ENCODE measurements at regions of chrX and their contacts with region 1.

Region 1: DNA sequence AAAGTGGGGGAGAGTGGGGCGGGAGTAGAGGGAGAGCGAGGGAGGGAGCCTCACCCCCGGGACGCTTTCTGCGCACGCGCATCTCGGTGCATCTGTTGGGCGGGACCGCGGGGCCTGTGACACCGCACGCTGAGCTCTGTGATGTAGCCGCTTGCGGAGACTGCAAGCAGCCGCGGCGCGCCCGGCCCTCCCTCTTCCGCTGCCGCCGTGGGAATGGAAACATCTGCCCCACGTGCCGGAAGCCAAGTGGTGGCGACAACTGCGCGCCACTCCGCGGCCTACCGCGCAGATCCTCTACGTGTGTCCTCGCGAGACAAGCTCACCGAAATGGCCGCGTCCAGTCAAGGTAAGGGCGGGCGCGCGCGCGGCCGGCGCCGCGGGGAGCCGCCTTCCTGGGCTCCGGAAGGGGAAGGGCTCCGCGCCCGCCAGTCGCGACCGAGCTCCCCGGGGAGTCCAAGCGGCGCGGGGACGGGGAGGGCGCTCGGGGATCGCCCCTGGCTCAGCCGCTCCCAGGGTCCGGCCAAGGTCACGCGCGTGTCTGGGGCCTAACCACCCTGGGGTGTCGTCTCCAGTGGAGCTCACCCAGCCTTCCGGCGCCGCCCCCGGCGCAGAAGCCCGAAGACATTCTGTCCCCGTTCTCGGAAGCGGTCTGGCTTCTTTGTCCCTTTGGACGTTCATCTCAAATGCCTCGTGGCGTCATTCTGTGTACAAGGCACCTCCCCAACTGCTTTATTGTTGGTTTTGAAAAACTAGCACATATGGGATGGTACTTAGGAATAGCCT is at the start of gene FUNDC2:
- DNase-seq: peak; percentile 90
- ATAC-seq: peak; percentile 89
- H3K4me3 ChIP-seq: peak within 1 kb of the TSS; percentile 96
- H3K27ac ChIP-seq: peak within 1 kb of the TSS; percentile 94
- H3K4me1 ChIP-seq: no peaks in the 10 kb centered on the region
- H3K27me3 ChIP-seq: no peaks in the 10 kb centered on the region; the same call in 1 of the 2 replicates
- CTCF ChIP-seq: no peak
- POLR2A ChIP-seq: peak; percentile 76; the same call in 1 of the 2 replicates
- RAD21 ChIP-seq: no peak
- total RNA-seq, gene FUNDC2: 35.0 and 42.5 TPM in 2 replicates

Region 2: GRCh38 chrX:155070975-155071693 is 44.2 kb after region 1 on chrX and contains the starts of genes BRCC3, CMC4 and MTCP1:
- CTCF ChIA-PET with region 1: no interaction called
- POLR2A ChIA-PET with region 1: no interaction called
- dilution Hi-C with region 1: no loop called
- in situ Hi-C with region 1: no loop called
- intact Hi-C with region 1: loop called (anchors 2 kb)
- DNase-seq: peak; percentile 79
- ATAC-seq: peak; percentile 95
- H3K4me3 ChIP-seq: peak within 1 kb of the TSS; percentile 59
- H3K27ac ChIP-seq: peak within 1 kb of the TSS; percentile 87
- H3K4me1 ChIP-seq: peaks cover 3% of the 10 kb centered on the region; the same call in 1 of the 2 replicates
- H3K27me3 ChIP-seq: no peaks in the 10 kb centered on the region
- CTCF ChIP-seq: no peak
- POLR2A ChIP-seq: peak; percentile 86
- RAD21 ChIP-seq: no peak
- total RNA-seq, gene BRCC3: 20.8 and 24.7 TPM in 2 replicates
- total RNA-seq, gene CMC4: 8.4 and 11.4 TPM in 2 replicates
- total RNA-seq, gene MTCP1: 0.54 and 0.56 TPM in 2 replicates